Activated B cell treated with CpG ODN at 0.5 μM for 24 hours (primary cell): ENCODE measurements at regions of chr10 and their contacts with region 1.

Region 1: GRCh38 chr10:110326351-110327032 is 21.8 kb upstream of the SMNDC1 start:
- DNase-seq: no peak
- ATAC-seq: peak; percentile 8
- H3K4me3 Mint-ChIP-seq: peak overlapping the region; percentile 4
- H3K27ac Mint-ChIP-seq: peak overlapping the region; percentile 92
- H3K4me1 Mint-ChIP-seq: peaks cover 49% of the 10 kb centered on the region
- H3K27me3 Mint-ChIP-seq: no peaks in the 10 kb centered on the region
- CTCF ChIP-seq: no peak

Region 2: DNA sequence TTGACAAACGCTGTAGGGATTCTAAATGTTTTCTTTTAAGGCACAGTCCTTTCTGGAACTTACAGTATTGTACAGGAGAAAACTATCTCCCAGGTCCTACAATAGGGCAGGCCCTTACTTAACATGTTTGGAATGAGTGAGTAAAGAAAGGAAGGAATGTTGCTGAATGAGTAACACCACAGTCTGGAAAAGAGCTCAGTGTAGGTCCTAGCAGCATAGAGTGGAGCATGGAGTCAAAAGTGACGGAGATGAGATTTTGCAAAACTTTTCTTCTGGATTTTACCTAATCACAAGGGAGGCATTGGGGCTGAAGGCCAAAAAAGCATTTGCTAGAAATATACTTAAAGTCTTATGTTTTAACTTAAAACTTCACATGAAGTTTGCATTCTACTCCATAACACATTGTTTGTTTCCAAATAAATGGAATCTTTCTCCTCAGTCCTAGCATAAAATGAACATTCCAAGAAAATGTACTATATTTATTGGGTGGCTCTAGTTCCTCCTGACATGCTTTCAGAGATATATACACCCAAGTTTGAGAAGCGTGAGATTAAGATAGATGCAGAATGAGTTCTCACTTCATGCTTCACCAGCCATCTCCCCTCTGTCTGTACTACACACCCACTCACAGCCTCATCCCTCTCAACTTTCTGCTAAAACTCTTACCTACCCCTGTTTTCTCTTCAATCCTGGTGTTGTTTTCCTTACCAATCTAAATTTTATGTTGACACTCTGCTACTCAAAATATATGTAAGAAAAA is 338.9 kb before region 1 on chr10:
- CTCF ChIA-PET with region 1: no interaction called
- POLR2A ChIA-PET with region 1: no interaction called
- intact Hi-C with region 1: no loop called
- DNase-seq: no peak
- ATAC-seq: no peak
- H3K4me3 Mint-ChIP-seq: no peak overlapping the region
- H3K27ac Mint-ChIP-seq: no peak overlapping the region
- H3K4me1 Mint-ChIP-seq: peaks cover 4% of the 10 kb centered on the region
- H3K27me3 Mint-ChIP-seq: no peaks in the 10 kb centered on the region
- CTCF ChIP-seq: no peak

Region 3: DNA sequence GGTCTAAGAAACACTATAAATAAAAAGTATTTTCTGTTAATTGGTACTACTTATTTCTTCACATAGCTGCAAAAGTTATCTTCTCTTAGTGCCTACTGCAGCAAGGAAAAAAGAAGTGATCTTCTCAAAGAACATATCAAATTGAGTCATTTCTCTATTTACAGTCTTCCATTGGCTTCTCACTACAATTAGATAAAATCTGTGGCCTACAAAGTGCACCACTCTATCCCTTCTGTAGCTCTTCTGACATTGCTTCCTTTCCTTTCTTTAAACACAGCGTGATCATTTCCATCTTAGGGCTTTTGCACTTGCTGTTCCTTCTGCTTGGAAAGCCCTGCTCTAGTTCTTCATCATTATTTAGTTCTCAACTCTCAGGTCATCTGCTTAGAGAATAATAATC is 74.3 kb before region 1 on chr10:
- CTCF ChIA-PET with region 1: no interaction called
- POLR2A ChIA-PET with region 1: no interaction called
- intact Hi-C with region 1: no loop called
- DNase-seq: no peak
- ATAC-seq: no peak
- H3K4me3 Mint-ChIP-seq: no peak overlapping the region
- H3K27ac Mint-ChIP-seq: no peak overlapping the region
- H3K4me1 Mint-ChIP-seq: no peaks in the 10 kb centered on the region
- H3K27me3 Mint-ChIP-seq: no peaks in the 10 kb centered on the region
- CTCF ChIP-seq: no peak

Region 4: DNA sequence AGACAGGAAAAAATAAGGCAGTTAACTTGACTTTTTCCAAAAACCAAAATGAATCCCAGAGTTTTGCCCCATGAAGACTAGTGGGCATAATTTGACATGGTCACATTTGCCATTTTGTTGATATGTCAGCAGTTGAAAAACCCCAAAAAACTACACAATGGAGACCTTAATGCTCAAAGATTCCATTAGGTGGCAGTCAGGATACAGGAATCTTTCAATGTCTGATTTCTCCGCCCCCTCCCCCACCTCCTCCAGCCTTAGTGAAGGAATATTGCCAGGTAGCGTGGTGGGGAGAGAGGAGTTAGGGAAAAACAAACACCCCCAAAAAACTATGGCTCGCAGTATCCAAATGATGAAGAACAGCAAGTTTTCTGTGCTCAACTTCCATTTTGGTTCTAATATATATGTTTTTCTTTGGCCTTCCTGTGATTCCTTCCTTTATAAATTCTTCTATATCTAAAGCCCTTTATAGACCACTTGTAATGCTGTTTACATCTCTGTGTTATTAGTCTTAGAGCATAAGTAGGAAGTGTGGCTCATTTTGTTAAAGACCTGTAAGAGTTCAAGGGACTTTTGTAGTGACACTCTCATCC is 15.0 kb before region 1 on chr10:
- CTCF ChIA-PET with region 1: interaction called, 3 read pairs
- POLR2A ChIA-PET with region 1: interaction called, 17 read pairs
- intact Hi-C with region 1: loop called (anchors 1 kb)
- DNase-seq: no peak
- ATAC-seq: peak; percentile 83
- H3K4me3 Mint-ChIP-seq: no peak overlapping the region
- H3K27ac Mint-ChIP-seq: peak overlapping the region; percentile 13
- H3K4me1 Mint-ChIP-seq: peaks cover 19% of the 10 kb centered on the region
- H3K27me3 Mint-ChIP-seq: no peaks in the 10 kb centered on the region
- CTCF ChIP-seq: no peak

Region 5: GRCh38 chr10:110344622-110345021 is 18.1 kb after region 1 on chr10:
- CTCF ChIA-PET with region 1: interaction called, 3 read pairs
- POLR2A ChIA-PET with region 1: interaction called, 11 read pairs
- intact Hi-C with region 1: no loop called
- DNase-seq: no peak
- ATAC-seq: no peak
- H3K4me3 Mint-ChIP-seq: no peak overlapping the region
- H3K27ac Mint-ChIP-seq: no peak overlapping the region
- H3K4me1 Mint-ChIP-seq: peaks cover 29% of the 10 kb centered on the region
- H3K27me3 Mint-ChIP-seq: peaks cover 12% of the 10 kb centered on the region
- CTCF ChIP-seq: no peak

Region 6: DNA sequence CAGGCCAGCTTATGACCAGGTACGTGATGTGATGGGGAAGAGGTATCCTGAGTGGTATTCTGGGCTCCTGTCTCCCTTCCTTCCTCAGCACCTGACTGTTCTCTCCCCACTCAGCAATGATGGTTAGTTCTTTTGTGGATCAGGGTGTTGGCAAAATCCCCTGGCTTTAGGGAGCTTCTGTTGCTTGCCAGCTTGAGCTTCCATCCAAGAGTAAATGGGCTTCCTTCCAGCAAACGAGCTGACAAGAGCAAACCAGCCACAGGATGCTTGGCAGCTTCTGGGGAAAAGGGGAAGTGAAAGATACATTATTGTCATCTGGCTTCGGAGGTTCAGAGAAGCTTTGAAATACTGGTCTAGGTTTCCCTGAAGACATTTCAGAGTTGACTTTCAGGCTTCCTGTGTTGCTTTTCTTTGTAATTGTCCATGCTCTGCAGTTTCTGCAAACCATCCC is 176.4 kb after region 1 on chr10:
- CTCF ChIA-PET with region 1: interaction called, 3 read pairs
- POLR2A ChIA-PET with region 1: interaction called, 11 read pairs
- intact Hi-C with region 1: no loop called
- DNase-seq: no peak
- ATAC-seq: peak; percentile 53
- H3K4me3 Mint-ChIP-seq: peak overlapping the region; percentile 72
- H3K27ac Mint-ChIP-seq: peak overlapping the region; percentile 90
- H3K4me1 Mint-ChIP-seq: peaks cover 76% of the 10 kb centered on the region
- H3K27me3 Mint-ChIP-seq: no peaks in the 10 kb centered on the region
- CTCF ChIP-seq: no peak

Region 7: GRCh38 chr10:110535958-110536891 is 209.7 kb after region 1 on chr10:
- CTCF ChIA-PET with region 1: no interaction called
- POLR2A ChIA-PET with region 1: interaction called, 3 read pairs
- intact Hi-C with region 1: loop called (anchors 1 kb)
- DNase-seq: peak; percentile 49
- ATAC-seq: peak; percentile 83
- H3K4me3 Mint-ChIP-seq: peak overlapping the region; percentile 62
- H3K27ac Mint-ChIP-seq: peak overlapping the region; percentile 68
- H3K4me1 Mint-ChIP-seq: peaks cover 31% of the 10 kb centered on the region
- H3K27me3 Mint-ChIP-seq: peaks cover 4% of the 10 kb centered on the region
- CTCF ChIP-seq: no peak